GM18951 (cell line): ENCODE measurements at regions of chr3 and their contacts with region 1.

Region 1: GRCh38 chr3:100254168-100254777 is 6.5 kb upstream of the TBC1D23 start:
- POLR2A ChIP-seq: no peak

Region 2: DNA sequence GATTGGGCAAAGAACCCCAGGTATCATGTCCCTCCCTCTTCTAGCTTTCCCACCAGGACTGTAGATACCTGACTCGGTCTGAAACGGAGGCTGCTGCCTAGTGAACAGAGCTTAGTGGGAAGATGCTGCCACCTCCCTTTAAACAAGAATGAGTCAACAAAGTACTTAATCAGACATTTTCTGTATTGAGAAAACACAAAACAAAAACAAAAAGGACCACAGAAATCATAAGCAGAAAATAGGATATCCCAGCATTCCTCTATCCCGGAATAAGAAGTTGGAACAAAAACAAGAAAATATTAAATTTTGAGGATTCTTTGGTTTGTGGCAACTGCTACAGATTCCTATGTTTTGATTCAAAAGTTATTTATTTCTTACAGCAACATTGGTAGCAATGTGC is 667.6 kb before region 1 on chr3:
- in situ Hi-C with region 1: no loop called
- POLR2A ChIP-seq: no peak

Region 3: GRCh38 chr3:99965077-99965476 is 289.2 kb before region 1 on chr3:
- in situ Hi-C with region 1: loop called (anchors 10 kb)
- POLR2A ChIP-seq: no peak

Region 4: GRCh38 chr3:100068826-100069225 is 185.4 kb before region 1 on chr3:
- in situ Hi-C with region 1: loop called (anchors 10 kb)
- POLR2A ChIP-seq: no peak

Region 5: DNA sequence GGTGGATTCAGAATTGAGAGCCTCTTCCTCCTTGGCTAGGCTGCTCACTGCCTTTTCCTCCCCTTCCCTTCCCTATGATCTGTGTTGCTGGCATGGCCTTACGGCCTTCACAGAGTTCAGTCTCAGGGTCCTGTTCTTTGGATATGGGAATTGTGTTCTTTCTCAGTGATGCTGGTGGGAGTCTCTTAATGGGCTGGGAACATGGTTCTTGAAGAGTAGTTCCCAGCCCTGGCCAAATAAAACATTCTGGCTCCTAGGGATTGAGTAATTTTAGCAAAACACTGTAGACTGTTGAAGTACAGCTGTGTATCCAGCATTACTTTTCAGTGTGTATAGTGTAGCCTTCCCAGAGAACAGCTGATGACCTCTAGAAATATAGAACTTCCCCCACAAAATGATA is 117.4 kb before region 1 on chr3:
- in situ Hi-C with region 1: no loop called
- POLR2A ChIP-seq: no peak